ENCODE measurements at regions of chr1 and their contacts with region 1.

Region 1: GRCh38 chr1:99170516-99170915 is 93.8 kb upstream of the PLPPR4 start:
- DNase-seq: peak; percentile 63
- H3K4me3 ChIP-seq: no peak overlapping the region
- H3K27ac ChIP-seq: no peak overlapping the region
- H3K4me1 ChIP-seq: peaks cover 8% of the 10 kb centered on the region
- H3K27me3 ChIP-seq: no peaks in the 10 kb centered on the region

Region 2: DNA sequence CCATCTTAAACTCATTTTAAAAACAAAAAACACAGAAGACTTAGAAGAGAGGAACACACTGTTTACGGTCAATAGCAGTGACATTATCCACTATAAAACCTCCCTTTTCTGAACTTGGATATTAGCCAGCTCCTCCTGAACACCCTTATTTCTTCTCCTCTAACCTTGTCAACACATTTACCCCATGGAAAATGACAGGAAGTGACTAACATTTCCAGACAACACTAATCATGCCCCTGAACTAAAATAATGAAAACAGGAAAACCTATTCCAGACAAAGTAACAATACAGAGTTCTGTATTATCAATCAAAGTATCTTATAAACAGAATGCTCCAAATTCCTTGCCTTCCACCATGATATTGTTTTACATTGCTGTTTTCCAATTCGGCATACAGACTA is 520.7 kb after region 1 on chr1:
- in situ Hi-C with region 1: loop called (anchors 10 kb)
- DNase-seq: no peak
- H3K4me3 ChIP-seq: no peak overlapping the region
- H3K27ac ChIP-seq: no peak overlapping the region
- H3K4me1 ChIP-seq: peaks cover 6% of the 10 kb centered on the region
- H3K27me3 ChIP-seq: no peaks in the 10 kb centered on the region

Measured in GM23248 (cell line).